GM10248 (cell line): ENCODE measurements at regions of chr11 and their contacts with region 1.

Region 1: GRCh38 chr11:34512840-34513681 is 533 bp downstream of the ELF5 start:
- DNase-seq: peak; percentile 77
- CTCF ChIP-seq: peak; percentile 73

Region 2: DNA sequence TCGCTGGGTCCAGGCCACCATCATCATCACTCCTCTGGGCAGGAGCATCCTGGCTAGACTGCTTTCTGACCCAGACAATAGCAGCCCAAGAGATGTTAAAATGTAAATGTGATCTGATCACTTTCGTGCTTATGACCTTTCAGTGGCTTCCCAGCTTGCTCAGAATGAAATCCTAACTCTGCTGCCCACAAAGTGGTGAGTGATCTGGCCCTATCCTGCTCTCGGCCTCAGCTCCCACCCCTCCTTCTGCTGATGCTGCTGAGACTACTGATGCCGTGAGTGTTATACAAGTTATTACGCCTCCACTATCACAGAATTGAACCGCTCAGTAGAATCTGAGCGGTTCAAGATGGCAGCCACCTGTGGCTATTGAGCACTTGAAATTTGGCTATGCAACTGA is 25.6 kb before region 1 on chr11:
- CTCF ChIA-PET with region 1: interaction called, 19 read pairs
- POLR2A ChIA-PET with region 1: no interaction called
- DNase-seq: no peak
- CTCF ChIP-seq: no peak

Region 3: GRCh38 chr11:34501500-34501899 is 11.6 kb before region 1 on chr11:
- CTCF ChIA-PET with region 1: interaction called, 31 read pairs
- POLR2A ChIA-PET with region 1: no interaction called
- DNase-seq: no peak
- CTCF ChIP-seq: no peak

Region 4: DNA sequence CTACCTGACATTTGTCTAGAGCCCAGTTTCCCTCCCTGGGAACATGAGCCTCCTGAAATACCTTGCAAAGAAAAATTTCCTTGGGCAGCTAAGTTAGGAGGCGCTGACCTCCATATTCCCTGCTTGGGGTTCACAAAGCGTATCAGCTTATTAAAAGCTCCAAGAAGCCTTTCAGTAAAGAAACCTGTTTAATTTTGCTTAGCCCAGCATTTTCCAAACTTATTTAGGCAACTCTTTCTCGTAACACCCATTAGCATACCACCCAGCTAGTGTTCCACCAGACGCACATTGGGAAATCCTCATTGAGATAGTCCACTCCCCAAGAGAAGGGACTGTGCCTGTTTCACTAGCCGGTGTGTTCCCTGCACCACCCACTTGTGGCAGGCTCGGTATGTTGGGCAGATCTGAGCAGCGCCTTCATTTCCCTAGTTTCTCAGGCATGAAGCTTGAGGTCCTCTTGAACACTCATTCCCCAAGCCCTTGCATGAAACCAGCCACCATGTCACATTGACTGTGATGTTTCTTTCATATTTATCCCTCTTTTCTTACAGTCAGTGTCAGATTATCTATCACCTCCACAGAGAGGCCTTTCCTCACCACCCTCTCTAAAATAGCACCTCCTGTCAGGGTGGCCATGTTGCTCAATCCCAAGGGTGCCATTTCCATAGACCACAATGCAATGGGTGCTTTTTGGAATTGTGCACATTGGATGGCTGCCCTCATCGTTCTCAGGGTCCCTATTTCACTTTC is 13.0 kb after region 1 on chr11:
- CTCF ChIA-PET with region 1: interaction called, 49 read pairs
- POLR2A ChIA-PET with region 1: no interaction called
- DNase-seq: no peak
- CTCF ChIP-seq: no peak

Region 5: GRCh38 chr11:34599406-34599901 is 86.4 kb after region 1 on chr11:
- CTCF ChIA-PET with region 1: no interaction called
- POLR2A ChIA-PET with region 1: no interaction called
- DNase-seq: no peak
- CTCF ChIP-seq: no peak

Region 6: DNA sequence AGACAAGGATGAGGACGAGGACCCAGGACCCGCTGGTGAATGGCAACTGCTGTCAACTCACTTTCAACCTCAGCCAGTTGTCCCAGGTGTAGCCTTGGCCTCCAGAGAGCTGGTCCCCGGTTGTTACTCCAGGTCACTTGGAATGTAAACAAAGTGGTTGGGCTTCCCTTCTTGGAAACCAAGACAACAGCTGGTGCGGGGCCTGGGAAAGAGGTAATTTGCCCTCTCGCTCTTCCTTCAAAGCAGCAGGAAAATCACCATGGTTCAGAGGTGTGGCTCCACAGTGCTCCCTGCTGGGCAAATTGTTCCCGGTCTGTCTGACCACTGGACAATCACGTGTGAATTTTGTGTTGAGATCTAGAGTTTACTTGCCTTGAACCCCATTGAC is 891.3 kb after region 1 on chr11:
- CTCF ChIA-PET with region 1: interaction called, 12 read pairs
- POLR2A ChIA-PET with region 1: no interaction called
- DNase-seq: no peak
- CTCF ChIP-seq: peak; percentile 42